Panc1 (cell line): ENCODE measurements at regions of chr14 and their contacts with region 1.

Region 1: DNA sequence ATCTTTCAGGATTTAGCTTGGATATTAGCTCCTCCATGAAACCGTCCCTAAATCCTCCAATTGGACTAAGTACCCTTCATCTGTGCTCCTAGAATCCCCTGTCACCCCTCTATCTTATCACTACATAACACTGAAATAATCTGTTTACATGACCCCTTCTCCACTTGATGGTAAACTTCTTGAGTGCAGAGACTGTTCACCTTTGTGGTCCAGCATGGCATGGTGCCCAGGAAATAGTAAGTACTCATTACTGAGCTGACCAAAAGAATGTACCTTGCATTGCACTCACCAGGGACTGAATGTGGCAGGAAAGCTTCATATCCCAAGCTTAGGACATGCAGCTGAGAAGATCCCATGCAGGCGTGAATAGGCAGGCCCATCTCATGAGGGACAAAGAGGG is 1.5 kb upstream of the GARIN2 start:
- DNase-seq: peak; percentile 54
- ATAC-seq: peak; percentile 81
- H3K4me3 ChIP-seq: peak overlapping the region in 1 of 2 experiments; percentile 29; a peak in 1 of 4 replicates
- H3K27ac ChIP-seq: peak overlapping the region; percentile 98
- H3K4me1 ChIP-seq: peaks cover 44% of the 10 kb centered on the region
- H3K27me3 ChIP-seq: no peaks in the 10 kb centered on the region
- CTCF ChIP-seq: no peak

Region 2: DNA sequence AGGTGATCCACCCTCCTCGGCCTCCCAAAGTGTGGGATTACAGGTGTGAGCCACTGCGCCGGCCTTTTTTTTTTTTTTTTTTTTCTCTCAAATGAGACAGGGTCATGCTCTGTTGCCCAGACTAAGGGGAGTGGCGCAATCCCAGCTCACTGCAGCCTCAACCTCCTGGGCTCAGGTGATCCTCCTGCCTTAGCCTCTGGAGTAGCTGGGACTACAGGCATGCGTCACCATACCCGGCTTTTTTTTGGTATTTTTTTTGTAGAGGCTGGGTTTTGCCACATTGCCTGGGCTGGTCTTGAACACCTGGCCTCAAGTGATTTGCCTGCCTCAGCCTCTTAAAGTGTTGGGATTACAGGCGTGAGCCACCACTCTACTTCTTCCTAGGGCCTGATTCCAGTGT is 1756.5 kb before region 1 on chr14:
- CTCF ChIA-PET with region 1: no interaction called
- POLR2A ChIA-PET with region 1: interaction called, 13 read pairs
- in situ Hi-C with region 1: no loop called
- intact Hi-C with region 1: no loop called
- DNase-seq: no peak
- ATAC-seq: no peak
- H3K4me3 ChIP-seq: no peak overlapping the region
- H3K27ac ChIP-seq: no peak overlapping the region
- H3K4me1 ChIP-seq: no peaks in the 10 kb centered on the region
- H3K27me3 ChIP-seq: no peaks in the 10 kb centered on the region
- CTCF ChIP-seq: no peak

Region 3: GRCh38 chr14:67240978-67241414 is 53.2 kb after region 1 on chr14:
- CTCF ChIA-PET with region 1: no interaction called
- POLR2A ChIA-PET with region 1: no interaction called
- in situ Hi-C with region 1: no loop called
- intact Hi-C with region 1: loop called (anchors 2 kb)
- DNase-seq: peak; percentile 72
- ATAC-seq: peak; percentile 92
- H3K4me3 ChIP-seq: peak overlapping the region; percentile 79
- H3K27ac ChIP-seq: peak overlapping the region; percentile 96
- H3K4me1 ChIP-seq: peaks cover 20% of the 10 kb centered on the region
- H3K27me3 ChIP-seq: no peaks in the 10 kb centered on the region
- CTCF ChIP-seq: no peak